ENCODE measurements at regions of chr11 and their contacts with region 1.

Region 1: DNA sequence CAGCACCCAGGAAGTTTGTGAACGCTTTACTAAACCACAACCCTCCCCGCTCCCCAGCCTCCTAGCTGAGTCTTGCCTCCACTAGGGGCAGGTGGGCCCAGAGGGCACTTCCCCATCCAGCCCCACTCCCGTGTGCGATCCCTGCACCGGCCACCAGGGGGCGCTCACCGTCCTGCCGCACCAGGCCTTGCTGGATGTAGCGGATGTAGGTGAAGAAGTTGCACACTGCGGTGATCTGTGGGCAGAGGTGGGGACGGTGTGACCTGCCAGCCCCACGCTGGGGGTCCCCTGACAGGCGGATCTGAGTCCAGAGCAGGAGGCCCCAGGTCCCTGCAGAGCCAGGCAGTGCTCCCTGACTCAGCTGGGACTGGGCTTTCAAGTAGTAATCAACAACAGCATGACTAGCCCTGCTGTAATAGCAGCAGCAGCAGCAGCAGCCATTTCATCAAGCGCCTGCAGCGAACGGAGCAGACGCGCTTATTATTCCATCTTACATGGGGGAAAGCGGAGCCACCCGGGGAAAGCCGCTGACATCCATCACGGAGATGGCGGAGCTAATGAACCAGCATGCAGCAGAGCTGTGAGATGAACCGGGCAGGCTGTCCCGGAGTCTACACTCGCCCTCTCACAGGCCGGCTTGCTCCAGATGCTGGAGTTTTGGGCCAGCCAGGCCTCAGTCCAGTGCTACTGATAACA is 7.9 kb upstream of the FADS3 start:
- DNase-seq: peak; percentile 95
- ATAC-seq: peak; percentile 94
- H3K4me3 Mint-ChIP-seq: peak overlapping the region; percentile 30
- H3K27ac Mint-ChIP-seq: peak overlapping the region; percentile 55
- H3K4me1 Mint-ChIP-seq: peaks cover 3% of the 10 kb centered on the region
- H3K27me3 Mint-ChIP-seq: no peaks in the 10 kb centered on the region

Region 2: DNA sequence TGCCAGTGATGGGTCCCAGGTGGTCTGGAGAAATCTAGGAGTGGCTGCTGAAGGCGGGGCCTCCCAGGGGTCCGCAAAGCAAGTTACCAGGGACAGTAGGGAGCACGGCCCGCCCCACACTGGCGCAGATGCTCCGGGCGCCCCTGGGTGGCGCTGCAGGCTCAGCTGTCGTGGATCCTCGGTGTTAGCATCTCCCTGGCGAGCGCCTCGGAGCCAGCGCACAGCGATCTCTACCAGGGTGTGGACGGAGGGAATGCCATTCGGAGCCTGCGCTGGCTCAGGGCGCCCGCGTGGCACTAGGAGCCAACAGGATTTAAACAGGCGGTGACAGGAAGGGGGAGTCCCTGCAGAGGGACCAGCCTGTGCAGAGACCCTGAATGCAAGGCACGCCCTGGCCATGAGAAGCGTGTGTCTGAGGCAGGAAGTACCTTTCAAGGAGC is 28.1 kb before region 1 on chr11:
- CTCF ChIA-PET with region 1: interaction called, 6 read pairs
- POLR2A ChIA-PET with region 1: no interaction called
- intact Hi-C with region 1: loop called (anchors 1 to 2 kb)
- DNase-seq: peak; percentile 84
- ATAC-seq: peak; percentile 98
- H3K4me3 Mint-ChIP-seq: peak overlapping the region; percentile 46
- H3K27ac Mint-ChIP-seq: no peak overlapping the region
- H3K4me1 Mint-ChIP-seq: peaks cover 2% of the 10 kb centered on the region
- H3K27me3 Mint-ChIP-seq: peaks cover 3% of the 10 kb centered on the region

Region 3: DNA sequence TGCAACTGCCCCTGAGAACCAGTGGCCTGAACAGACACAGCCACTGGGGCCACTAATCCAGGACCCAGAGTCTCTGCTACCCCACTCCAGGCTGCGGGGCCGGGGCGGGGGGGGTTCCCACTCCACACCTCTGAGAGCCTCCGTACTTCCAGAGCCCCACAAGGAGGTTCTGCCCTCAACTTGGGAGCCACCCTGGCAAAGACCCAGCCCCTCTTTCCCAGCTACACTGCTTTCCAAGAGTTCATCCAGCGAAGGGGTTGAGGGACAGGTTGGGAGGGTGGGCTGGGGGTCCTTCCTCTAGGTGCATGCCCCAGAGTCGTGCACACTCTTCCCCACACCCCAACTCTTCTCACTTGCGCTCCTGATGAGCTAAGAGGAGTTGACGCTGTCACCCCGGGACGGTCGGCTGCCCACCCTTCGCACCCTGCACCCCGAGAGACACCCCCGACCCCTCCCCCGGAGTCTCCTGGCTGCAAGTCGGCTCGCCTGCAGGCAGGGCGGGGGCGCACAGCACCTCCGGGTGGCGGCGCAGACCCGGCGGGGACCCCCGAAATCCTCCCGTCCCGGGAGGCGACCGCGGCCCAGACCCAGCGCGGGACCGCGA is 17.5 kb after region 1 on chr11:
- CTCF ChIA-PET with region 1: interaction called, 23 read pairs
- POLR2A ChIA-PET with region 1: no interaction called
- intact Hi-C with region 1: no loop called
- DNase-seq: no peak
- ATAC-seq: peak; percentile 27
- H3K4me3 Mint-ChIP-seq: no peak overlapping the region
- H3K27ac Mint-ChIP-seq: no peak overlapping the region
- H3K4me1 Mint-ChIP-seq: peaks cover 4% of the 10 kb centered on the region
- H3K27me3 Mint-ChIP-seq: peaks cover 49% of the 10 kb centered on the region

Region 4: GRCh38 chr11:61923166-61924063 is 24.1 kb after region 1 on chr11:
- CTCF ChIA-PET with region 1: interaction called, 13 read pairs
- POLR2A ChIA-PET with region 1: no interaction called
- intact Hi-C with region 1: no loop called
- DNase-seq: no peak
- ATAC-seq: no peak
- H3K4me3 Mint-ChIP-seq: no peak overlapping the region
- H3K27ac Mint-ChIP-seq: no peak overlapping the region
- H3K4me1 Mint-ChIP-seq: no peaks in the 10 kb centered on the region
- H3K27me3 Mint-ChIP-seq: peaks cover 18% of the 10 kb centered on the region